B cell (primary cell): ENCODE measurements at regions of chr7 and their contacts with region 1.

Region 1: GRCh38 chr7:123682690-123683089 is 27.0 kb downstream of the LMOD2 start:
- DNase-seq: peak; percentile 38
- ATAC-seq: no peak
- H3K4me3 ChIP-seq: no peak overlapping the region
- H3K4me3 Mint-ChIP-seq: no peak overlapping the region
- H3K27ac ChIP-seq: no peak overlapping the region
- H3K27ac Mint-ChIP-seq: no peak overlapping the region
- H3K4me1 ChIP-seq: no peaks in the 10 kb centered on the region
- H3K4me1 Mint-ChIP-seq: no peaks in the 10 kb centered on the region
- H3K27me3 ChIP-seq: no peaks in the 10 kb centered on the region
- H3K27me3 Mint-ChIP-seq: no peaks in the 10 kb centered on the region
- CTCF ChIP-seq: peak; percentile 69

Region 2: DNA sequence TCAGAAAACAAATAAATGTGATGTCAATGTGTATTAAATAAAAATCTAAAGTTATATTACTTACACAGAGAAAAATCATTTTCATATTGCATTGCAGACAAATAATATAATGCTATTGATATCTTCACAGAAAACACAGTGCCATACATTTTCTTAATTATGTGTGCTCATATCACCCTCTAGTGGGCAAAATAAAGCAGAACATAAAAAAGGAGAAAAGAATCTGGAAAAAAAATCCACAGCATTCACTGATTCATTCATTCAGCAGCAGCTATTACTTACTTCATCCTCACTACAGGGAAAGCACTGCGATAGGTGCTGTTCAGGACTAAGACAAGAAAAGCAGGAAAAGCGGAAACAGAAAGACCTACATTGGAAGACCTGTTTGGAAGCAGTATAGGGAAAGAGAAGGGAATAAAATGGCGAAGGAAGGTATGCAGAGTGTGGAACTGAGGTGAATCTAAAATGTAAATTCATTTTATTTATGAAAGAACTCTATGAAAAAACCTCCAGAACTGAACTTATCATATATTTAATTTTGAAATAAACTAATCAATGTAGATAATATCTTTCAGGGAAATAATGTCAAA is 1173.7 kb after region 1 on chr7:
- CTCF ChIA-PET with region 1: interaction called, 5 read pairs
- POLR2A ChIA-PET with region 1: no interaction called
- intact Hi-C with region 1: loop called (anchors 5 kb)
- DNase-seq: peak; percentile 23
- ATAC-seq: no peak
- H3K4me3 ChIP-seq: no peak overlapping the region
- H3K4me3 Mint-ChIP-seq: no peak overlapping the region
- H3K27ac ChIP-seq: no peak overlapping the region
- H3K27ac Mint-ChIP-seq: no peak overlapping the region
- H3K4me1 ChIP-seq: no peaks in the 10 kb centered on the region
- H3K4me1 Mint-ChIP-seq: no peaks in the 10 kb centered on the region
- H3K27me3 ChIP-seq: no peaks in the 10 kb centered on the region
- H3K27me3 Mint-ChIP-seq: no peaks in the 10 kb centered on the region
- CTCF ChIP-seq: peak; percentile 76